Activated CD4-positive, alpha-beta T cell treated with anti-CD3 and anti-CD28 coated beads for 36 hours (primary cell): ENCODE measurements at regions of chr1 and their contacts with region 1.

Region 1: GRCh38 chr1:53945433-53946251 is at the start of gene IFT25:
- DNase-seq: peak; percentile 99
- ATAC-seq: peak; percentile 79
- H3K4me3 Mint-ChIP-seq: peak within 1 kb of the TSS; percentile 95
- H3K27ac Mint-ChIP-seq: peak within 1 kb of the TSS; percentile 89
- H3K4me1 Mint-ChIP-seq: peaks cover 50% of the 10 kb centered on the region
- H3K27me3 Mint-ChIP-seq: no peaks in the 10 kb centered on the region
- total RNA-seq, gene IFT25: 56.6 to 62.0 TPM

Region 2: GRCh38 chr1:52726265-52727113 is 1219.2 kb before region 1 on chr1 and contains the start of gene ZYG11B:
- CTCF ChIA-PET with region 1: no interaction called
- POLR2A ChIA-PET with region 1: no interaction called
- intact Hi-C with region 1: loop called in 1 of 2 experiments (anchors 1 kb)
- DNase-seq: peak; percentile 96
- ATAC-seq: peak; percentile 91
- H3K4me3 Mint-ChIP-seq: peak within 1 kb of the TSS; percentile 93
- H3K27ac Mint-ChIP-seq: peak within 1 kb of the TSS; percentile 85
- H3K4me1 Mint-ChIP-seq: peaks cover 32% of the 10 kb centered on the region
- H3K27me3 Mint-ChIP-seq: no peaks in the 10 kb centered on the region
- total RNA-seq, gene ZYG11B: 12.9 to 14.3 TPM

Region 3: DNA sequence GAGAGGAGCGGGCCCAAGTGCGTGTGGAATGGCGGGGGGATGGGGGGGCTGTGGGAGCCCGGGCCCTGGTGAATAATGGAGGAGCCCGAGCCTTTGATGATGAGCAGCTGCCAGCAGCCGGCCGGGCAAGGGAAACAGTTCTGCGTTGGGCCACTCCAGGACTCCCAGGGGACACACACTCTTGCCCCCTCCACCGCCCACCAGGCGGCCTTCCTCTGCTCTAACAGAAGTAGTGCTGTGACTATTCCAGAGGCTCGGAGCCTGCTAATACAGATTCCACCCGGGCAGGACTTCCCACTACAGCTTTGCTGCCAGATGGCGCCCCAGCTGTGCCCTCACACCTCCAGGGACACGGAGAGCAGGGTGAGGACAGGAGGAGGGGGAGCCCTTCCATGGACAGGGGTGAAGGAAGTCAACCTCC is 569.6 kb before region 1 on chr1:
- CTCF ChIA-PET with region 1: no interaction called
- POLR2A ChIA-PET with region 1: no interaction called
- intact Hi-C with region 1: no loop called
- DNase-seq: no peak
- ATAC-seq: no peak
- H3K4me3 Mint-ChIP-seq: no peak overlapping the region
- H3K27ac Mint-ChIP-seq: no peak overlapping the region
- H3K4me1 Mint-ChIP-seq: no peaks in the 10 kb centered on the region
- H3K27me3 Mint-ChIP-seq: peaks cover 3% of the 10 kb centered on the region

Region 4: DNA sequence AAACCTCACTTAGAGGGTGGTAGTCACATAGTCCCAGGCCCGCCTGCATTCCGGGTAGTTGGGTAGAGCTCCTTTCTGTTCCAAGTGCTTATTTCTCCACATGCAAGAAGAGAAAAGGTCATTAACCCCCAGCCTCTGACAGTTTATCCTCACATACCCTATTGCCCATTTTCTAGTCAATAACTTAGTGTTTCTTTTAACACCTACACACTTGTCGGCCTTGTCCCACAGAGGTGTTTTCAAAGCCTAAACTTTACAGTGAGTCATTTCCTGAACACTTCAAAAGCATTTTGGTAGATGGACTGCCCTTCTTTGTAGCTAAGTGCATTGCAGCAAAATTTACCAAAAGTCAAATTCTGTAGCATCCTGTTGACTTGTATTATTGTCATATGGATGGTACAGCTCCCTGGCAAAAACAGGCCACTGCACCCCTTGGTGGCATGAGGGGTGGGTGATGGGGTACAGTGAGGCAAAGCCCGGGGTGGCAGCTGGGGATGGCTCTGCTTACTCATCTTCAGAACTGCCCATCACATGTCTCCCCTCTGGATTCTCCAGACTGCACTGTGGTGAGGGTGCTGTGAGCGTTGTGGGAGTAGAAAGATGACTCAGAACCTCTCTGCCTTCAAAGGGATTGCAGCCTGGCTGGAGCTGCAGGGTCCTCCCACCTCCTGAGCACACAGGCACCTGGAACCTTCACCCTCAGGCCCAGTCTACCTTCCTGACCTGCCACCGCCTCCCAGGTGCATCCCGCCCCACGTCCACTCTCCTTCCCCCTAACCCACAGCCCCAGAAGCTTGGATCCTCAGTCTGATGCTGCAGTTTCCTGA is 532.3 kb before region 1 on chr1:
- CTCF ChIA-PET with region 1: no interaction called
- POLR2A ChIA-PET with region 1: no interaction called
- intact Hi-C with region 1: loop called in 1 of 2 experiments (anchors 1 kb)
- DNase-seq: peak; percentile 74
- ATAC-seq: peak; percentile 89
- H3K4me3 Mint-ChIP-seq: peak overlapping the region; percentile 10
- H3K27ac Mint-ChIP-seq: peak overlapping the region; percentile 88
- H3K4me1 Mint-ChIP-seq: peaks cover 48% of the 10 kb centered on the region
- H3K27me3 Mint-ChIP-seq: no peaks in the 10 kb centered on the region

Region 5: GRCh38 chr1:53889304-53890298 is 56.0 kb before region 1 on chr1 and contains the start of gene YIPF1:
- CTCF ChIA-PET with region 1: interaction called, 5 read pairs
- POLR2A ChIA-PET with region 1: interaction called, 16 read pairs
- intact Hi-C with region 1: loop called (anchors 1 kb)
- DNase-seq: peak; percentile 93
- ATAC-seq: peak; percentile 90
- H3K4me3 Mint-ChIP-seq: peak within 1 kb of the TSS; percentile 96
- H3K27ac Mint-ChIP-seq: peak within 1 kb of the TSS; percentile 94
- H3K4me1 Mint-ChIP-seq: peaks cover 38% of the 10 kb centered on the region
- H3K27me3 Mint-ChIP-seq: no peaks in the 10 kb centered on the region
- total RNA-seq, gene YIPF1: 19.0 to 24.4 TPM

Region 6: GRCh38 chr1:54764133-54764921 is 818.7 kb after region 1 on chr1 and contains the start of gene PARS2:
- CTCF ChIA-PET with region 1: no interaction called
- POLR2A ChIA-PET with region 1: no interaction called
- intact Hi-C with region 1: loop called in 1 of 2 experiments (anchors 1 kb)
- DNase-seq: peak; percentile 98
- ATAC-seq: peak; percentile 99
- H3K4me3 Mint-ChIP-seq: peak within 1 kb of the TSS; percentile 89
- H3K27ac Mint-ChIP-seq: peak within 1 kb of the TSS; percentile 91
- H3K4me1 Mint-ChIP-seq: peaks cover 13% of the 10 kb centered on the region
- H3K27me3 Mint-ChIP-seq: no peaks in the 10 kb centered on the region
- total RNA-seq, gene PARS2: 6.3 to 6.8 TPM